Activated B cell treated with CpG ODN at 0.5 μM for 24 hours (primary cell): ENCODE measurements at regions of chr5 and their contacts with region 1.

Region 1: GRCh38 chr5:67165526-67166459 is 30.8 kb downstream of the CD180 start:
- DNase-seq: peak; percentile 67
- ATAC-seq: peak; percentile 86
- H3K4me3 Mint-ChIP-seq: peak overlapping the region; percentile 86
- H3K27ac Mint-ChIP-seq: peak overlapping the region; percentile 95
- H3K4me1 Mint-ChIP-seq: peaks cover 26% of the 10 kb centered on the region
- H3K27me3 Mint-ChIP-seq: no peaks in the 10 kb centered on the region
- CTCF ChIP-seq: no peak

Region 2: GRCh38 chr5:66840511-66841013 is 325.2 kb before region 1 on chr5:
- CTCF ChIA-PET with region 1: no interaction called
- POLR2A ChIA-PET with region 1: no interaction called
- intact Hi-C with region 1: no loop called
- DNase-seq: no peak
- ATAC-seq: peak; percentile 92
- H3K4me3 Mint-ChIP-seq: no peak overlapping the region
- H3K27ac Mint-ChIP-seq: no peak overlapping the region
- H3K4me1 Mint-ChIP-seq: peaks cover 16% of the 10 kb centered on the region
- H3K27me3 Mint-ChIP-seq: peaks cover 8% of the 10 kb centered on the region
- CTCF ChIP-seq: no peak

Region 3: DNA sequence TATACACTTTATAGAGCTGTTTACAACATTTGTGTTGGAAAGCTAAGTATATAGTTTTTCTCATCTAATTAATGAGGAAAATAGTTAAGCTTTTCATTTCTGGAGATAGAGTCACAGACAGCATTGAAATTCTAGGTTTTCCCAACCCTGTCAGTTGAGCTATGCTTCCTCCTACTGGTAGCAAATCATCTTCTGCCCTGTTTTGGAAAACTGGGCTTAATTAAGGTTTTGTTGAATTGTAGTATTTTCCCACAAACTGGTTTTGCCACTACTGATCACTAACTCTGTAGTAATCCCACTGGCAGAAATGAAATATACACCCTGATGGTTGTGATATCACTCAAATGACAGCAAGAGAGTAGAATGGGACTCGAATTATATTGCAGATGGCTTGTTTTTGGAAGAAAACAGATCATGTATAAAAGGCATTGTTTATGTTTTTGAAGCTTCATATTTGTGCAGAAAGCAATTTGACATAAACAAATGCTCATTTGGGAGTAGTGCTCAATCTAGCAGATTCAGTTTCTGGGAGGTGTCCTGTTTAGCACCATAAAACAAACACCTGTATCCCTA is 15.8 kb before region 1 on chr5:
- CTCF ChIA-PET with region 1: no interaction called
- POLR2A ChIA-PET with region 1: no interaction called
- intact Hi-C with region 1: no loop called
- DNase-seq: no peak
- ATAC-seq: no peak
- H3K4me3 Mint-ChIP-seq: no peak overlapping the region
- H3K27ac Mint-ChIP-seq: no peak overlapping the region
- H3K4me1 Mint-ChIP-seq: no peaks in the 10 kb centered on the region
- H3K27me3 Mint-ChIP-seq: no peaks in the 10 kb centered on the region
- CTCF ChIP-seq: no peak

Region 4: GRCh38 chr5:67182301-67182790 is 16.6 kb after region 1 on chr5:
- CTCF ChIA-PET with region 1: interaction called, 11 read pairs
- POLR2A ChIA-PET with region 1: interaction called, 6 read pairs
- intact Hi-C with region 1: loop called (anchors 1 kb)
- DNase-seq: no peak
- ATAC-seq: no peak
- H3K4me3 Mint-ChIP-seq: no peak overlapping the region
- H3K27ac Mint-ChIP-seq: peak overlapping the region; percentile 86
- H3K4me1 Mint-ChIP-seq: peaks cover 84% of the 10 kb centered on the region
- H3K27me3 Mint-ChIP-seq: no peaks in the 10 kb centered on the region
- CTCF ChIP-seq: no peak

Region 5: DNA sequence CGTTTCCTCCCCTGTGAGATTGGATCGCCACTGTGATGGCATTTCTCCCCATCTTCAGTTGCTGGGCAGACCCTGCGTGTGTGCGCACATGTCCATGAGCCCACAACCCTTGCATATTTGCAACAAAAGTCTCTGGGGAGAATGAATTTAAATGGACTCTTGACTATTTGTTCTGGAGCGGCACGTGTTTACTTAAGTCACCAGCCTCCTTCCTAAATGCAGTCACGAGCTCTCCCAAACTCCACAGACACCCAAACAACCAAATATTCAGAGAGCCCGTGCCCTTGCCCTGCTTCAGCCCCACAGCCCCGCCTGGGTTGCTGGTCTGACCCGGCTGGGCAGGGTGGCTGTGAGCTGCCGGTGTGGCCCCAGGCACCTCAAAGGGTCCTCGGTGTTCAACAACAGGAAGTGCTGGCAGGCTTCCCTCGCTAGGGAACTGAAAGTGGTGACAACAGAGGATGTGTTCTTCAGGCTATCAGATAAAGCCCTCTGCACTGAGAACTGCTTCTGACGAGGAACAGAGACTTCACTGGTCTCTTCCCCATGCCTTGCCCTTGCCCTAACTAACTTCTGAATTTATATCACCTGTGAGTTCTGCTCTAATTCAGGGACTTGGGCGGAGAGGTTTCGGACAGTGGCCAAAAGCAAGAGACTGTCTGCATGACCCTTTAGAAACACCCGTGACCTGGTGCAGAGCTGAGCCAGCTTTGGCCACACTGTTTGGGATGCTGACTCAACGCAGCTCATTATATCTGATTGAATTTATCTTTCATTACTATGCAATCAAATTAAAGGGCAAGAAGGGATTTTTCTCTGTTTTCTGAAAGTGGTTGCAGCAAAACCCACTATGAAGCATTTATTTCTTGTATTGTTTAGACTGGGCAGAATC is 50.0 kb after region 1 on chr5:
- CTCF ChIA-PET with region 1: interaction called, 164 read pairs
- POLR2A ChIA-PET with region 1: interaction called, 18 read pairs
- intact Hi-C with region 1: no loop called
- DNase-seq: peak; percentile 70
- ATAC-seq: peak; percentile 98
- H3K4me3 Mint-ChIP-seq: peak overlapping the region; percentile 76
- H3K27ac Mint-ChIP-seq: peak overlapping the region; percentile 98
- H3K4me1 Mint-ChIP-seq: peaks cover 58% of the 10 kb centered on the region
- H3K27me3 Mint-ChIP-seq: no peaks in the 10 kb centered on the region
- CTCF ChIP-seq: no peak

Region 6: DNA sequence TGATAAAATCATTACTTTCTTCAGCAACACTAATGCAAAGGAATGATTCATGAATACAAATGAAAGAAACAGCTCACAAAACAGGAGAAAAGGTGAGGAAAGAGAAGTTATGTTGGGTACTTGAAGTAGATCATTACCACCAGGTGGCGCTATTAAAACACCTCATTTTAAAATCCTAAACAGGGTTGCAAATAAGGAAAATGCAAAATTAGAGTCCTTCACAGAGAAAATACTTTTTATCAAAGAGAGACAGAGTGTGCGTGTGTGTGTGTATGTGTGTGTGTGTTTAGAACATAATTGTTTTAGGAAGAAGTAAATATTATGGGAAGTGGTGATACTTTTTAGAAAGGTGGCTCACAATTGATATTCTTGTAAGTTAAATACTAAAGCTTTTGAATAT is 80.3 kb after region 1 on chr5:
- CTCF ChIA-PET with region 1: interaction called, 11 read pairs
- POLR2A ChIA-PET with region 1: no interaction called
- intact Hi-C with region 1: loop called (anchors 1 kb)
- DNase-seq: no peak
- ATAC-seq: no peak
- H3K4me3 Mint-ChIP-seq: no peak overlapping the region
- H3K27ac Mint-ChIP-seq: no peak overlapping the region
- H3K4me1 Mint-ChIP-seq: peaks cover 2% of the 10 kb centered on the region
- H3K27me3 Mint-ChIP-seq: no peaks in the 10 kb centered on the region
- CTCF ChIP-seq: peak; percentile 53

Region 7: GRCh38 chr5:67414712-67415111 is 248.9 kb after region 1 on chr5:
- CTCF ChIA-PET with region 1: no interaction called
- POLR2A ChIA-PET with region 1: no interaction called
- intact Hi-C with region 1: no loop called
- DNase-seq: no peak
- ATAC-seq: no peak
- H3K4me3 Mint-ChIP-seq: no peak overlapping the region
- H3K27ac Mint-ChIP-seq: no peak overlapping the region
- H3K4me1 Mint-ChIP-seq: no peaks in the 10 kb centered on the region
- H3K27me3 Mint-ChIP-seq: no peaks in the 10 kb centered on the region
- CTCF ChIP-seq: no peak